Thyroid gland (tissue), 4 donors: ENCODE measurements at regions of chr1 and their contacts with region 1.

Region 1: DNA sequence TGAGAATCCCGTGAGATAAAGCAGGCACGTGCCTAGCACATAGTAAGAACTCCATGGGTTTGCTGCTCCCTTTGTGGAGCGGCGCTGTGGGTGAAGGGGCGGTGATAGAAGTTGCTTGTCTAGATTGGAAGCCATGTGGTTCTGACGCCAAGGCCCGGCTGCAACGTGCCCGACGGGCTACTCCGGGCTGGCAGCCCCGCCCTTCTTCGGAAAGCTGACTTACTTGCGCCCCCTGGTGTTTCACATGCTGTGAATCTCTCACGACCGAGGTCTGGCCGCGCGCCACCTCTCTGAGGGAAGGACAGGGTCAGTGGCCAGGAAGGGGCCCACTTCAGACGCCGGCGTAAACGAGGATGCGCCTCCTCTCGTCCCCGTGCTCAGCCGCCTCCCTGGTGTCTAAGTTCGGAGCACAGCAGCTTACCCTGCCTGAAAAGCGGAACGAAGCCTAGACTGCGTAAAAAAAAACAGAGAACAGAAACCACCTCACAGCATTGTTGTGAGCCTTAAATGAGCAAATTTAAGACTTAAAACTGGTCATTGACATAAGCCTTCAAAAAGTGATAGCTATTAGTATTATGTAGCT is 42.6 kb upstream of the WNT2B start:
- DNase-seq: peak; percentile 95 to 97
- H3K4me3 ChIP-seq: peak overlapping the region in 1 of 3 donors; percentile 1
- H3K27ac ChIP-seq: peak overlapping the region in 2 of 3 donors; percentile 26 to 35
- H3K4me1 ChIP-seq: peaks cover 12 to 21% of the 10 kb centered on the region in 2 donors
- H3K27me3 ChIP-seq: no peaks in the 10 kb centered on the region
- CTCF ChIP-seq: peak; percentile 58 to 94 (median 86)
- POLR2A ChIP-seq: no peak

Region 2: DNA sequence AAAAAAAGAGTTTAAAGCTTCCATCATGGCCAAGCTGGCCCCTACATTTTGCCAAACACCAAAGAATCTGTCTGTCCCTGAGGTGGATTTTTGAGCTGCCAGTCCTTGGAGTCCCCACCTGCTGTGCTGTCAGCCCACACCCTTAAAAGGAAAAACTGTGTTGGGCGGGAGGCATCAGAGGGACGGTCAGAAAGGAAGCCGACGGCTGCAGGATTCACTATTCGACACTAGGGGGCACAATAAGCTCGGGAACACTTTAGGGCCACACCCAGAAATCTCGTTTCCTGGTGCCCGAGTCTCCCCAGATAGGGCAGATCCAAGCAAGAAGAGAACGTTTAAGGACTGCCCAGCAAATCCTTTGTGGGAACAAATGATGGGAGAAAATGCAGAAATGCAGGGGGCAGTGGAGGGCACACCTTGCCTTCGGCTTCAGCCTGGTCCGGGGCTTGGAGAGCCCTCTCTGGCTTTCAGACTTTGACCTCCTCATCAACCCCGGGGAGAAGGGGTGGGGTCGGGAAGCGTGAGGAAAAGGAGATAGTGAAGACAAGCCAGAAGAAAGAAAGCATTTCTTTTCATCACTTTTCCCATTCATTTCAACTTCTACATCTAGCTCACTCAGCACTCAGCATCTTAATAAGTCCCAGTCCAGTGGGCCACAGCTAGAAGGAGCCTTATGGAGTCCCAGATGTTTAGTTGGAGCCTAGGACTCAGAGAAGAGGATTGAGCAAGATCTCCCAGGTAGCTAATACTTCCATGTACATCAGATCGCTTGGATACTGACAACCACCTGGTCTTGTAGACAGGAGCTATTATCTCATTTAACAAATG is 75.2 kb before region 1 on chr1:
- intact Hi-C with region 1: loop called (anchors 2 kb)
- DNase-seq: peak; percentile 86 to 88
- H3K4me3 ChIP-seq: peak overlapping the region in 1 of 3 donors; percentile 16
- H3K27ac ChIP-seq: peak overlapping the region; percentile 56 to 76 (median 71)
- H3K4me1 ChIP-seq: peaks cover 11 to 24% of the 10 kb centered on the region in 2 donors
- H3K27me3 ChIP-seq: no peaks in the 10 kb centered on the region
- CTCF ChIP-seq: peak; percentile 87 to 98 (median 94)
- POLR2A ChIP-seq: no peak

Region 3: DNA sequence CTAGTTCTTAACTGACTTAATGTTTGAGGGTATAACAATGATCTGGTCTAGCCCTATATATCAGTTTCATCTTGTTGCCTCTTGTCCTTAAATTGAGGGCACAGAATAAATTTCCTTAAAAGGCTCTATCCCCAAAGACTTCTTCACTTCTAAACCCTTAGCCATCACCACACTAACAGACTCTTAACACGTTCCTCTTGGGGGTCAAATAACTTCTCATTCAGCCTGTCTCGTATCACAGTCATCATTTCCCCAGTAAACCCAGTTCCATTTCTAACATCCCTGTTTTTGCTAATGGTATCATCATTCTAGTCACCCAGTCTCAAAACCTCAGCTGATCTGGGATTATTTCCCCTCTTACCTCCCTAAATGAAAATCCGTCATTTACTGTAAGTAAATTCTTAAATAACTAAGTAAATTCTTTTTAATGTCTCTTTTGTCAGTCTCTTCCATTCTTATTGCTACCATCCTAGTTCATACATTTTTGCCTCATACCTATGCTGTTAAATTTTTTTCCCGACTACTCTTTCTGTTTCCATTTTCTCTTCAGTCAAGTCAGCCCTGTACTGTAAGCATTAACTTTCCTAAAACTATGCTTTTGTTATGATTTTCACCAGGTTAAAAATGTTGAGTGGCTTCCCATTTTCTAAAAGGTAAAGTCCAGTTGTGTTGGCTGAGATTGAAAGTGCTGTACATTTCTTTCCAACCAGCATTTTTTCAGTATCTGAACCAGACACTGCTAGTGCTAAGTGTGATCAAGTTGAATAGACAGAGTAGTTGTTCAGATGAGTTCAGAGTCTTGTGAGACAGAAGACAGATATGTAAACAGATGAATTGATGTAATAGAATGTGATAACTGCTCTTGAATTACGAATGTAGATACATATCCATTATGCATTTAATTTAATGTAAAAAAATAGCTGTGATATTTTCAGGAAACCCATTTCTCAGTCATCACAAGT is 63.2 kb before region 1 on chr1:
- intact Hi-C with region 1: loop called (anchors 5 kb)
- DNase-seq: no peak
- H3K4me3 ChIP-seq: no peak overlapping the region
- H3K27ac ChIP-seq: no peak overlapping the region
- H3K4me1 ChIP-seq: peaks cover 4 to 7% of the 10 kb centered on the region in 2 donors
- H3K27me3 ChIP-seq: no peaks in the 10 kb centered on the region
- CTCF ChIP-seq: no peak
- POLR2A ChIP-seq: no peak

Region 4: GRCh38 chr1:112706908-112707663 is 240.9 kb after region 1 on chr1 and contains the start of gene RHOC:
- intact Hi-C with region 1: loop called (anchors 10 kb)
- DNase-seq: peak; percentile 90
- H3K4me3 ChIP-seq: peak within 1 kb of the TSS; percentile 87 to 100 (median 99)
- H3K27ac ChIP-seq: peak within 1 kb of the TSS; percentile 92 to 97 (median 95)
- H3K4me1 ChIP-seq: peaks cover 15 to 29% of the 10 kb centered on the region in 2 donors
- H3K27me3 ChIP-seq: no peaks in the 10 kb centered on the region
- CTCF ChIP-seq: peak; percentile 78 to 95 (median 90)
- POLR2A ChIP-seq: peak; percentile 38 to 78
- total RNA-seq, gene RHOC: 125 to 188 (median 175) TPM